ENCODE measurements at regions of chr10 and their contacts with region 1.

Region 1: DNA sequence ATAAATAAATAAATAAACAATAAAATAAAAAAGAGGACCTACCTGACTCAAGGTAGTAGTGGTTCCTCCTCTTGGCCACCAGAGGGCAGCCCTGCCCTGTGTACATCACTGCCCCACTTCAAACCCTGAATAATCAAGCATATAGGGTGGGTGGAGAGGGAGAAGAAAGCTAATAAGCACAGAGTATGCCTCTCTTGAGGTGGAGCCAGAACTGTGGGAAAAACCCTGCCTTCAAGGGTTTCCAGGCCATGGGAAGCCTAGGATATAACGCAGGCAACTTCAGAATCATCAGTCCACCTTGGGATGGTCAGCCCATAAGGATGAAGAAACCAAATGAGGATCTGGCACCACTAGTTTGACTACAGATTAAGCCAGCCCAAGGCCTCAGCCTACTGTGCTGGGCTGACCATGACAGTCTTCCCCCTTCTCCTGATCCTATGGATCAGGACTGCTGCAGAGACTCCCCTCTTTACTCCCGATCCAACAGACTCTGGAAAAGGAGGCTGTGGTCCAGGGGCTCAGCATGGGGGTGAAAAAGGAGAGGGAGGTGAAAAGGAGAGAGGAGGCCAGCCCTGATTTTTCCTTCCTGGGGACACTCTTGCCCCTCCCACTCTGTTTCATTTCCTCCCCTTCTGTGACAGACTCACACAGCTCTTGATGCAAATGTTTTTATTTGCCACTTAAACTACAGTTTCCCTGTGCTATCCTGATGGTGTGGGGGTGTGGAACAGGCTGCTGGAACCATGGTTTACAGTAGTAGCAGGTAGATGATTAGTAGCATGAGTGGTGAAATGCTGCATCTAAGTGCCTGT is 10.1 kb downstream of the AVPI1 start:
- DNase-seq: no peak
- H3K4me3 ChIP-seq: no peak overlapping the region
- H3K27ac ChIP-seq: peak overlapping the region; percentile 27
- H3K4me1 ChIP-seq: peaks cover 25% of the 10 kb centered on the region
- H3K27me3 ChIP-seq: no peaks in the 10 kb centered on the region
- CTCF ChIP-seq: peak; percentile 82 to 86 (median 83)
- POLR2A ChIP-seq: no peak

Region 2: GRCh38 chr10:97736902-97737769 is 60.2 kb after region 1 on chr10 and contains the start of gene ZFYVE27:
- intact Hi-C with region 1: loop called (anchors 10 kb)
- DNase-seq: no peak
- H3K4me3 ChIP-seq: peak within 1 kb of the TSS; percentile 73 to 77
- H3K27ac ChIP-seq: peak within 1 kb of the TSS; percentile 84
- H3K4me1 ChIP-seq: peaks cover 31% of the 10 kb centered on the region
- H3K27me3 ChIP-seq: no peaks in the 10 kb centered on the region
- CTCF ChIP-seq: no peak
- POLR2A ChIP-seq: peak in 1 of 2 donors; percentile 92
- total RNA-seq, gene ZFYVE27: 28.0 TPM

Measured in vagina (tissue), 2 donors.